GM12878 (cell line): ENCODE measurements at regions of chr2 and their contacts with region 1.

Region 1: GRCh38 chr2:30231212-30231995 is at the start of gene LBH:
- DNase-seq: peak; percentile 56
- ATAC-seq: peak; percentile 59
- H3K4me3 ChIP-seq: peak within 1 kb of the TSS; percentile 80
- H3K27ac ChIP-seq: peak within 1 kb of the TSS; percentile 58
- H3K4me1 ChIP-seq: peaks cover 47% of the 10 kb centered on the region
- H3K27me3 ChIP-seq: no peaks in the 10 kb centered on the region
- CTCF ChIP-seq: peak in 1 of 3 experiments; percentile 31; a peak in 1 of 6 replicates
- EP300 ChIP-seq: peak in 1 of 2 experiments; percentile 27; a peak in 1 of 4 replicates
- POLR2A ChIP-seq: peak; percentile 99
- RAD21 ChIP-seq: peak; percentile 24; the same call in 1 of the 2 replicates
- polyA plus RNA-seq, gene LBH: 9.3 to 26.5 TPM

Region 2: GRCh38 chr2:30252723-30253701 is 21.6 kb after region 1 on chr2:
- CTCF ChIA-PET with region 1: interaction called, 6 read pairs
- POLR2A ChIA-PET with region 1: interaction called, 4 read pairs
- RAD21 ChIA-PET with region 1: interaction called, 3 read pairs
- SMC1A ChIA-PET with region 1: interaction called, 10 read pairs
- in situ Hi-C with region 1: no loop called
- intact Hi-C with region 1: no loop called
- DNase-seq: no peak
- ATAC-seq: peak; percentile 64
- H3K4me3 ChIP-seq: no peak overlapping the region
- H3K27ac ChIP-seq: no peak overlapping the region
- H3K4me1 ChIP-seq: no peaks in the 10 kb centered on the region; the same call in 1 of the 2 replicates
- H3K27me3 ChIP-seq: no peaks in the 10 kb centered on the region
- CTCF ChIP-seq: no peak
- EP300 ChIP-seq: no peak
- POLR2A ChIP-seq: no peak
- RAD21 ChIP-seq: no peak

Region 3: GRCh38 chr2:30447149-30448045 is 216.0 kb after region 1 on chr2 and contains the start of gene LCLAT1:
- CTCF ChIA-PET with region 1: interaction called, 5 read pairs
- POLR2A ChIA-PET with region 1: interaction called, 4 read pairs
- RAD21 ChIA-PET with region 1: interaction called, 7 read pairs
- SMC1A ChIA-PET with region 1: interaction called, 4 read pairs
- in situ Hi-C with region 1: no loop called
- intact Hi-C with region 1: loop called (anchors 2 kb)
- DNase-seq: peak; percentile 44
- ATAC-seq: peak; percentile 95
- H3K4me3 ChIP-seq: peak within 1 kb of the TSS; percentile 93
- H3K27ac ChIP-seq: peak within 1 kb of the TSS; percentile 77
- H3K4me1 ChIP-seq: no peaks in the 10 kb centered on the region; the same call in 1 of the 2 replicates
- H3K27me3 ChIP-seq: no peaks in the 10 kb centered on the region
- CTCF ChIP-seq: no peak; a peak in 1 of 6 replicates
- EP300 ChIP-seq: no peak
- POLR2A ChIP-seq: peak; percentile 84
- RAD21 ChIP-seq: no peak
- polyA plus RNA-seq, gene LCLAT1: 8.1 to 33.0 TPM

Region 4: GRCh38 chr2:30481323-30481800 is 250.0 kb after region 1 on chr2:
- CTCF ChIA-PET with region 1: interaction called, 18 read pairs
- POLR2A ChIA-PET with region 1: interaction called, 4 read pairs
- RAD21 ChIA-PET with region 1: interaction called, 12 read pairs
- SMC1A ChIA-PET with region 1: interaction called, 26 read pairs
- in situ Hi-C with region 1: no loop called
- intact Hi-C with region 1: loop called (anchors 10 kb)
- DNase-seq: no peak
- ATAC-seq: peak; percentile 23
- H3K4me3 ChIP-seq: no peak overlapping the region
- H3K27ac ChIP-seq: no peak overlapping the region
- H3K4me1 ChIP-seq: peaks cover 8% of the 10 kb centered on the region; the same call in 1 of the 2 replicates
- H3K27me3 ChIP-seq: no peaks in the 10 kb centered on the region
- CTCF ChIP-seq: no peak
- EP300 ChIP-seq: no peak
- POLR2A ChIP-seq: no peak
- RAD21 ChIP-seq: no peak